Dendritic cell treated with granulocyte-macrophage colony-stimulating factor and Interleukin-4, amounts not matched to agents 40 ng/mL and 50 ng/mL, for 4 days (primary cell): ENCODE measurements at regions of chr1 and their contacts with region 1.

Region 1: GRCh38 chr1:156193488-156194299 is at the start of gene SLC25A44:
- H3K4me3 Mint-ChIP-seq: peak within 1 kb of the TSS; percentile 96
- H3K27ac Mint-ChIP-seq: peak within 1 kb of the TSS; percentile 89
- H3K4me1 Mint-ChIP-seq: peaks cover 55% of the 10 kb centered on the region
- H3K27me3 Mint-ChIP-seq: no peaks in the 10 kb centered on the region

Region 2: DNA sequence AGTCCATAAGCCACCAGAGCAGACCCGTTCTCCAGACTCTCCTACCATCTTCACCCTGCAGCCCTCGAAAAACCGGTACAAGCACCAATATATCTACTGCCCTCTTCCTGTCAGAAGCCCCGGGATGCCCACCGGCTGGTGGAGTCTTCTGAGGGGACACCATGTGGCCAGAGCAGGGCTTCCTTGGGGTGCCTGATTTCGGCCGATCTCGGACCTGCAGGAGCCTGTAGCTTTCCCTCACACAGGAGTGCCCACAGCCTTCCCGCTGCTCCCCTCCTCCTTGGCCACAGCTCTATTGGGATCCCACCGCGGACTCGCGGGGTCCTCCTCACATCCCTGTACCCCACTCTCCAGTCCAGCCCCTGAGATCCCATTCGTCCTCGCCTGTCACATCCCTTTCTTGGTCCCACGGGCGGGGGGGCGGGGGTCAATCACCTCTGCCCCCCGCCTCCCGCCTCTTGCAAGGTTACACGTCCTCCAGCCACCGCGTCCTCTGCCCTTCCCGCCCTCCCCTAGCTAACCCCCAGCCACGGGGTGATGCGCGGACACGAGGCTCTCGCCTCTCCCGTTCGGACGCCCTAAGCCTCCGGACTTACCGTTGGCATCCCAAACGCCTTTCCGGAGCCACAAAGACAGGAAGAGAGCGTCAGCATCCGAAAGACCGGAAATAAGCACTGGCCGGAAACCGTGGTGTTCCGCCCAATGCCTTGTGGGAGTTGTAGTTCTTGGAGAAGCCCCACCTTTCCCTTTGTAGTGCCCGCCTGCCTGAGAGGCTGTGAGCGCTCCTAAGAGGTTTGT is 173.2 kb before region 1 on chr1 and contains the start of gene SSR2:
- intact Hi-C with region 1: no loop called
- H3K4me3 Mint-ChIP-seq: peak within 1 kb of the TSS; percentile 97
- H3K27ac Mint-ChIP-seq: peak within 1 kb of the TSS; percentile 94
- H3K4me1 Mint-ChIP-seq: peaks cover 27% of the 10 kb centered on the region
- H3K27me3 Mint-ChIP-seq: peaks cover 24% of the 10 kb centered on the region

Region 3: DNA sequence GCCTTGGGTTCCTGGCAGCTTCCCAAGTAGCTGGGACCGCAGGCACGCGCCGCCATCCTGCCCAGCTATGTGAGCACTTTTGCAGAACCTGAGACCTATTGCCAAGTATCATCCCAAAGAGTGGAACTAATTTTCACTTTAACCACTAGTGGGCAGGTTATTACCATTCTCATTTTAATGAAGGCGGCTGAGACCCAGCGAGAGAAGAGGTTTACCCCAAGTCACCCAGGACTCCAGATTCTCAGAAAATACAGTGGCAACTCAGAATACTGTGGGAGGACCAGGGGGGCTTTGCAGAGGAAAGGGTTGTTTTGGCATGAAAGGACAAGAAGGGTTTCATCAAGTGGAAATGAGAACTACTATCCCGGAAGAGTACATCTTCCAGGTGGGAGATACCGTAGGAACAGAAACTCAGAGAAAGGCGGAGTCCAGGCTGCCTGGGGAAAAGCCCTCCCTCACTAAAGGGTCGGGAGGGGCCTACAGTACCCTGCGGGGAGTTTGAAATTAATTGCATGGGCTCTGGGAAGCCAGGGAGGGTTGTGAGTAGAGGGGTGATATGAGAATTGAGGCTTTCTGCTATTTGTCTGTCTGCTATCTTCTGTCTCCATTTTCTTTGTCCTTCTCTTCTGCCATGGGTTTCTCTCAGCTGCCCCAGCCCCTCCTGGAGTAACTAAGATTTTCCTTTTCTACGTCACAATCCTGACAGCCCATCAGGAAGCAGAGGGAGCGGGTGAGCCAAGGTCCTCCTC is 47.5 kb before region 1 on chr1:
- intact Hi-C with region 1: loop called (anchors 1 kb)
- H3K4me3 Mint-ChIP-seq: peak overlapping the region; percentile 37
- H3K27ac Mint-ChIP-seq: peak overlapping the region; percentile 98
- H3K4me1 Mint-ChIP-seq: peaks cover 58% of the 10 kb centered on the region
- H3K27me3 Mint-ChIP-seq: no peaks in the 10 kb centered on the region

Region 4: DNA sequence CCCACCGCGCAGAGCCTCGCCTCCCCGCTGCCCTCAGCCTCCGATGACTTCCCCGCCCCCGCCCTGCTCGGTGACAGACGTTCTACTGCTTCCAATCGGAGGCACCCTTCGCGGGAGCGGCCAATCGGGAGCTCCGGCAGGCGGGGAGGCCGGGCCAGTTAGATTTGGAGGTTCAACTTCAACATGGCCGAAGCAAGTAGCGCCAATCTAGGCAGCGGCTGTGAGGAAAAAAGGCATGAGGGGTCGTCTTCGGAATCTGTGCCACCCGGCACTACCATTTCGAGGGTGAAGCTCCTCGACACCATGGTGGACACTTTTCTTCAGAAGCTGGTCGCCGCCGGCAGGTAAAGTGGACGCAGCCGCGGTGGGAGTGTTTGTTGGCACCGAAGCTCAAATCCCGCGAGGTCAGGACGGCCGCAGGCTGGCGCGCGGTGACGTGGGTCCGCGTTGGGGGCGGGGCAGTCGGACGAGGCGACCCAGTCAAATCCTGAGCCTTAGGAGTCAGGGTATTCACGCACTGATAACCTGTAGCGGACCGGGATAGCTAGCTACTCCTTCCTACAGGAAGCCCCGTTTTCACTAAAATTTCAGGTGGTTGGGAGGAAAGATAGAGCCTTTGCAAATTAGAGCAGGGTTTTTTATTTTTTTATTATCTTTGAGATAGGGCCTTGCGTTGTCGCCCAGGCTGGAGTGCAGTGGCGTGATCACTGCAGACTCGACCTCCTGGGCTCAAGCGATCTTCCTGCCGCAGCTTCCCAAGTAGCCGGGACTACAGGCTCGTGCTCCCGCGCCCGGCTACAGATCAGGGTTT is 19.3 kb after region 1 on chr1 and contains the start of gene PMF1:
- intact Hi-C with region 1: loop called (anchors 2 kb)
- H3K4me3 Mint-ChIP-seq: peak within 1 kb of the TSS; percentile 90
- H3K27ac Mint-ChIP-seq: peak within 1 kb of the TSS; percentile 98
- H3K4me1 Mint-ChIP-seq: peaks cover 33% of the 10 kb centered on the region
- H3K27me3 Mint-ChIP-seq: no peaks in the 10 kb centered on the region